ENCODE measurements at regions of chr3 and their contacts with region 1.

Region 1: DNA sequence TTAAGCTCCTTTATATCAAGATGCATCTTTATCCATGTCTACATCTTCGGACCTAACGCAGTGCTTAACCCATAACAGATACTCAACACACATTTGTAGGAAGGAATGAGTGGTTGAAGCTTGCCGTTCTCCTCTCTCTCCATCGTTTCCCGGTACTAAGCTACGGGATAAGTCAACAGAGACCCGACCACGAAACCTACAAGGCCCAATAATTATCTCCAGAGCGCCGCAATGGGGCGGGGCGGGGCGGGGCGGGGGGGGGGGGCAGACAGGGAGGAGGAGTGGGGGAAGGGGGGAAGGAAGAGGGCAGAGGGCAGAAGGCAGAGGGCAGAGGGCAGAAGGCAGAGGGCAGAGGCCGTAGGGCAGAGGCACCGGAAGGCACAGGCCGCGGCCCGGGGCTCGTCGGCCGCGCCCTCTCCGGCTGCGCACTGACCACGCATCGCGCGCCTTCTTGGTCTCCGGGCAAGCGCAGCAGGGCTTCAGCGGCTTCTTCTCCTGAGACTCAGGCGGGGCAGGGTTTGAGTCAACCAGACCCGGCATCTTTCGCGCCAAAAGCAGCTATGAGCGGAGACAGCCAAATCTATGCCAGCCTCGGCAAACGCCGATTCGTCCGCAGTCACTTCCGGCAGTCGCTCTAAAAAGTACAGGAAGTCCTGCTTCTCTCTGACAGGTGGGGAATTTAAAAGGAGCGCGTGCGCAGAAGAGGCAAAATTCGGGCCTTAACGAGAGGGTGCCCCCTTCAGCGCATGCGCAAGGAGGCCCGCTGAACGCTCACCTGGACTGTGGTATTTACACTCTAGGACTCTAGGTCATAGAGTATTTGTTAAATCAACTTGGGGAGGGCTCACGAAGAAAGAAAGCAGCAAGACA is at the start of gene COX17:
- DNase-seq: peak; percentile 98
- H3K4me3 Mint-ChIP-seq: peak within 1 kb of the TSS; percentile 95
- H3K27ac Mint-ChIP-seq: peak within 1 kb of the TSS; percentile 91
- H3K4me1 Mint-ChIP-seq: peaks cover 36% of the 10 kb centered on the region
- H3K27me3 Mint-ChIP-seq: no peaks in the 10 kb centered on the region
- total RNA-seq, gene COX17: 108 to 112 TPM

Region 2: DNA sequence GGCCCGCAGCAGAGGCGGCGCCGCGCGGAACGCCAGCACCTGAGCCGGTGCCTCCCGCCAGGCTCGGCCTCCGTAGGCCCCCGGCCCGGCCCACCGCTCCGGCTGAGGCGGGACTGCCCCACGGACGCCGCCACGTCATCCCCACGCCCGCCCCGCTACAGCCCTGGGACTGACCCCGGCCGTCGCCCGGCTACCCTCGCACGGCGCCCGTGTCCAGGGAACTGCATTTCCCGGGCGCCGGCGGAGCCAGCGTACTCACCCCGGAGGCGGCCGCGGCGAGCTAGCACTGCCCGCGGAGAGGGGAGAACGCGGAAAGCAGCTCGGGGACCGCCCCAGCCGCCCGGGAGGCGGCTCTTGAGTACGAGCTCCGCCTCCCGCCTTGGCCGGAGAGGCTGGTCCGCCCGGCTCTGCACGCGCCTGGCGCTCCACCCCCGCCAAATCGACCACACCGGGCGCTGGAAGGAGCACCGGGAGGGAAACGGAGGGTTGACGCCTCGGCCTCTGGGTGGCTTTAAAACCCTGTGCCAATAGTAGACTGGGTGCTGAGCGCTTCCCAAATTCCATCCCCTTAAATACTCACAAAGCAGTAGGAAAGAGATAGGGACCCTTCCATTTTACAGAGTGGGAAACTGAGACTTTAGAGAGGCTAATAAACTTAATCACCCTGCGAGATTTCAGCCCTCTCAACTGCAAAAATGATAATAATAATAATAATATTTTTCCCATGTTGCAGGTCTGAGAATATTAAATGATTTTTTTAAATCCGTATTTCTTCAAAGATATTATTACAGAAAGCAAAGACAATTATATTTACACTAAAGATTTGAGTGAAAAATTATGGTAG is 436.2 kb before region 1 on chr3 and contains the start of gene B4GALT4:
- CTCF ChIA-PET with region 1: interaction called, 10 read pairs
- POLR2A ChIA-PET with region 1: no interaction called
- intact Hi-C with region 1: loop called (anchors 1 kb)
- DNase-seq: peak; percentile 81
- H3K4me3 Mint-ChIP-seq: peak within 1 kb of the TSS; percentile 81
- H3K27ac Mint-ChIP-seq: peak within 1 kb of the TSS; percentile 86
- H3K4me1 Mint-ChIP-seq: peaks cover 31% of the 10 kb centered on the region
- H3K27me3 Mint-ChIP-seq: no peaks in the 10 kb centered on the region
- total RNA-seq, gene B4GALT4: 13.5 to 14.2 TPM

Region 3: DNA sequence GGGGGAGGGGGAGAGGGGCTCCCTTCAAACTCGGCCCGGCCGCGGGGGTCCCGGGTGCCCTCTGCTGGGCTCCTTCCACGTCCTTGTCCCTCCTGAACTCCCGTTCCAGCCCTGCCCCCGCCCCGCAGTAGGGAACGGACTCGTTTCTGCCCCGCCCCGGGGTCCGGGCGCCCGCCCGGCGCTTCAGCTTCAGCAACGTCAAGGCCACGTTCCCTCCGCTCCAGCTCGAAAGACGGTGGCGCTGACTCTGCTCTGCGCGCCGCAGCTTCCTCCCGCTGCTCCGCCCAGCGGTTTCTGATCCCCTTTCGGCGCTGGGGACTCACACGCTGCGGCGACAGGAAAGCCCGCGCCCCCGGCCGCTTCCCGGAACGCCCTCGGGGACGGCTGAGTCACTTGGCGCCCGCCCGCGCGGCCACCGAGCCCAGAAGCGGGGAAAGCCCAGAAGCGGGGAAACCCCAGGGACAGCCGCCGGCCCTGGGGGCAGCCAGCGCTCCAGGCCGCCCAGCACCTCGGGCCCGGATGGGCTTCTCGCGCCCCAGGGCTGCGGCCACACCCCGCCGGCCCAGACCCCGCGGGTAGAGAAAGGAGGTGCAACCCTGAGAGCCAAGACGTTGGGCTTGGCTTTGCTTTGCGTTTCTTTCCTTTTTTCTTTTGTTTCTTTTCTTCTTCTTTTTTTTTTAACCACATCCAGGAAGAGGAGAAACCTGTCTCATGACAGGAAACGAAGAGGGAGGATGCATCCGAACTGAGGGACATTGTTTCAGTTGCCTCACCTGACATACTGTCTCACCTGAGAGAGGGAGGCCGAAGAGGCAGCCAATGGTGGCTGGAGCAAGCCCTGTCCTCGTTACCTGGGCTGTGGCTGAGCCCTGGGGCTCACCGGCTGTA is 353.9 kb before region 1 on chr3:
- CTCF ChIA-PET with region 1: no interaction called
- POLR2A ChIA-PET with region 1: no interaction called
- intact Hi-C with region 1: loop called (anchors 1 kb)
- DNase-seq: peak; percentile 97
- H3K4me3 Mint-ChIP-seq: peak overlapping the region; percentile 82
- H3K27ac Mint-ChIP-seq: peak overlapping the region; percentile 95
- H3K4me1 Mint-ChIP-seq: peaks cover 41% of the 10 kb centered on the region
- H3K27me3 Mint-ChIP-seq: no peaks in the 10 kb centered on the region

Region 4: DNA sequence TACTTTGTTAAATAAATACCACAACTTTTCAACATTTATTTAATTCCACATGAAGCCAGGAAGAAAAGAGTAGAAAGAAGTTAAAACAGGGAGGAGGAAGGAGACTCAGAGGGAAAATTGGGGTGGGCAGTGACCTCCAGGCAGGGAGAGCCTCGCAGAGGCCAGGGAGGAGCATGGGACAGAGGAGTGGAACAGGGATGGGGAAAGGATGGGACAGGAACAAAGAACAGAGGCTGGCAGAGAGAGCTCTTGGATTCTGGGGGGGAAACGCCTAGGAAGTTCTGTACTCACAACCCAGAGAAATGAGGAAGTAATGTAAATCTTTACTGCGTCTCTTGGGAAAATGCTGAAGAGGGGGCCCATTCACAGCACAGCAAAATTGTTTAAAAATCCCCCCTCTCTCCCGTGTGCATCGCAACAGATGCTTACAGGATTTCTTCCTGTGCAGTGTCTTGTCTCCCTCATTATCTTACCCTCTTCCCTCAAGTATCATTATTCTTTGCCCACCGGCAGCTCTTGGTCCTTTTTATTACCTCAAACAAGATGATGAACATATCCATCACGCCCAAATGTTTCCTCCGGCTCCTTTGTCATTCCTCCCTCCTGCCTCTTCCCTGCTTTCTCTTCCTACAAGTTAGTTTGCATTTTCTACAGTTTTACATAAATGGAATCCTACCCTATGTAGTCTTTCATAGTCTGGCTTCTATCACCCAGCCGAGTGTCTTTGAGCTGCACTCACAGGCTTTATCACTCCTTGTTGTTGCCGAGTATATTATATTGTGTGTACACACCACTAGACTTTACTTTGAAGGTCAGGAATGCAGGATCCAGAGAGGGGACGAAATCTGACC is 317.3 kb before region 1 on chr3:
- CTCF ChIA-PET with region 1: no interaction called
- POLR2A ChIA-PET with region 1: no interaction called
- intact Hi-C with region 1: no loop called
- DNase-seq: no peak
- H3K4me3 Mint-ChIP-seq: no peak overlapping the region
- H3K27ac Mint-ChIP-seq: no peak overlapping the region
- H3K4me1 Mint-ChIP-seq: no peaks in the 10 kb centered on the region
- H3K27me3 Mint-ChIP-seq: no peaks in the 10 kb centered on the region

Region 5: GRCh38 chr3:119498186-119498987 is 178.6 kb before region 1 on chr3 and contains the start of gene TIMMDC1:
- CTCF ChIA-PET with region 1: interaction called, 3 read pairs
- POLR2A ChIA-PET with region 1: interaction called, 10 read pairs
- intact Hi-C with region 1: loop called (anchors 1 kb)
- DNase-seq: peak; percentile 98
- H3K4me3 Mint-ChIP-seq: peak within 1 kb of the TSS; percentile 98
- H3K27ac Mint-ChIP-seq: peak within 1 kb of the TSS; percentile 96
- H3K4me1 Mint-ChIP-seq: peaks cover 29% of the 10 kb centered on the region
- H3K27me3 Mint-ChIP-seq: no peaks in the 10 kb centered on the region
- total RNA-seq, gene TIMMDC1: 93.7 to 105 TPM

Region 6: GRCh38 chr3:119529883-119530282 is 147.1 kb before region 1 on chr3:
- CTCF ChIA-PET with region 1: no interaction called
- POLR2A ChIA-PET with region 1: no interaction called
- intact Hi-C with region 1: no loop called
- DNase-seq: no peak
- H3K4me3 Mint-ChIP-seq: no peak overlapping the region
- H3K27ac Mint-ChIP-seq: no peak overlapping the region
- H3K4me1 Mint-ChIP-seq: peaks cover 3% of the 10 kb centered on the region
- H3K27me3 Mint-ChIP-seq: no peaks in the 10 kb centered on the region

Region 7: DNA sequence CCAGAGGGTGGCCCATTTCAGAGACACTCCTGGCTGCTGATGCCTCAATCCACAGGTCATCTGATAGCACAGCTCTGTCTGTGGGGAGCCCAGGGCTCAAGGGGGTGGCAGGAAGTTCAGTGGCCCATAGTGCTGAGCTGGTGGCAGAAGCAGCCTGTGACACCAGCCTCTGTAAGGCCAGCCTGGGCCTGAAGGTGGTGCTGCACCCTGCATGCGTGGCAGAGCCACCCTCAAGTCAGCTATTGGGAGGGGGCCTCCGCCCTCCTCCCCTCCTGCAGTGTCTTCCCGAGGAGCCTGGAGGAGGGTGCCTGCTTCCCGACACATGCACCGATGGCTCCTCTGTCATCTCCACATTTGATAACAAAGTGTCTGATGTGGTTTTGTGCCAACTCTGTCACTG is 76.3 kb before region 1 on chr3:
- CTCF ChIA-PET with region 1: interaction called, 27 read pairs
- POLR2A ChIA-PET with region 1: interaction called, 9 read pairs
- intact Hi-C with region 1: loop called (anchors 1 kb)
- DNase-seq: peak; percentile 70
- H3K4me3 Mint-ChIP-seq: no peak overlapping the region
- H3K27ac Mint-ChIP-seq: no peak overlapping the region
- H3K4me1 Mint-ChIP-seq: peaks cover 27% of the 10 kb centered on the region
- H3K27me3 Mint-ChIP-seq: peaks cover 2% of the 10 kb centered on the region

Region 8: DNA sequence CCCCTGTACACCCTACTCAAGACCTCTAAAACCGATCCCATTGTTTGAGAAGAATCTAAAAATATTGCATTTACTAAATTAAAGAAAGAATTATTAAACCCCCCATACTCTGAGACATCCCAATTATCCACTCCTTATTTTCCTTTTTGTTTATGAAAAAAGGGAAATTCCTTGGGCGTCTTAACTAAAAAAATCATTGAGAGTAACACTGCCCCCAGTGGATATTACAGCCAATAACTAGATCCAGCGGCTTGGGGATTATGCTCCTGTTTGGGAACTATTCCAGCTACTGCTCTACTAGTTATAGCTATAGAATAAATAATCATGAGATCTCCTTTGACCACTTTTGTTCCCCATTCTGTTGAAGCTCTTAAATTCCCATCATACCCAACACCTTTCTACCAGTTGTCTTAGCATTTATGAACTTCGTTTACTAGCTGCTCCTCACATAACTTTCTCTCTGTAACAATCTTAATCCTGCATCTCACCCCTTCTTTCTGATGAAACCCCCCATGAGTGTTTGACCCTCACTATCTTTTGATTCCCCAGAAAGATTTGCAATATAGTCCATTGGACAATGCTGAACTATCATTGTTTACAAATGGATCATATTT is 13.1 kb after region 1 on chr3:
- CTCF ChIA-PET with region 1: interaction called, 13 read pairs
- POLR2A ChIA-PET with region 1: no interaction called
- intact Hi-C with region 1: no loop called
- DNase-seq: no peak
- H3K4me3 Mint-ChIP-seq: no peak overlapping the region
- H3K27ac Mint-ChIP-seq: no peak overlapping the region
- H3K4me1 Mint-ChIP-seq: no peaks in the 10 kb centered on the region
- H3K27me3 Mint-ChIP-seq: peaks cover 2% of the 10 kb centered on the region

Region 9: GRCh38 chr3:119723022-119723421 is 46.0 kb after region 1 on chr3:
- CTCF ChIA-PET with region 1: no interaction called
- POLR2A ChIA-PET with region 1: no interaction called
- intact Hi-C with region 1: no loop called
- DNase-seq: no peak
- H3K4me3 Mint-ChIP-seq: no peak overlapping the region
- H3K27ac Mint-ChIP-seq: no peak overlapping the region
- H3K4me1 Mint-ChIP-seq: no peaks in the 10 kb centered on the region
- H3K27me3 Mint-ChIP-seq: no peaks in the 10 kb centered on the region

Region 10: DNA sequence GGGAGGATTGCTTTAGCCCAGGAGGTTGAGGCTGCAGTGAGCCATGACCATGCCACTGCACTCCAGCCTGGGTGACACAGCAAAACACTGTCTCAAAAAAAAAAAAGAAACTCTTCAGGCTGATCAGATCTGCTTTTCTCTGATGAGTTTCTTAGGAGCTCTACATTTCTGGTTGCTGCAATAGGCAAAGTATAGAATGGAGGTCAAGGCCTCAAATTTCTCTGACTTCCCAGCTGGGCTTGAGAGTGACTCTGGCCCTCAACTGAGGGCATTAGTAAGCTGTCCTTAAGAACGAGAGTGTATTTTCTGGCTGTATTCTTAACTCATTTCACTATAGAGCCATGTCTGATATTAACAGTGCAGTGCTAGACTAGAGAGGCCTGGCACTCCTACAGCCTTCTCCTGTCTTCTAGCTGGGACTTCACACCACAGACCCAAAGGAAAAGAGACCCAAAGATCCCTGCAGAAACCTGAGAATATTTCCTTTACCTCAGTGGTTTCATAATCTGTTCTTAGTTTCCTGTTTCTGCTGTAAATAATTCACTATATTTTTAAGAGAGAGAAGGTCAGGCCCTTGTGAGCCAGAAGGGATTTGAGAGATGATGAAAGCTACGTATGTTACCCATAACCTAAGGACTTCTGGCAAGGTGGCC is 102.9 kb after region 1 on chr3:
- CTCF ChIA-PET with region 1: no interaction called
- POLR2A ChIA-PET with region 1: no interaction called
- intact Hi-C with region 1: no loop called
- DNase-seq: no peak
- H3K4me3 Mint-ChIP-seq: no peak overlapping the region
- H3K27ac Mint-ChIP-seq: no peak overlapping the region
- H3K4me1 Mint-ChIP-seq: peaks cover 4% of the 10 kb centered on the region
- H3K27me3 Mint-ChIP-seq: no peaks in the 10 kb centered on the region

Measured in activated CD4-positive, alpha-beta memory T cell treated with anti-CD3 and anti-CD28 coated beads for 36 hours (primary cell).